B cell (primary cell): ENCODE measurements at regions of chr14 and their contacts with region 1.

Region 1: GRCh38 chr14:74712499-74713394 is at the starts of genes AREL1 and FCF1:
- DNase-seq: peak; percentile 91
- ATAC-seq: peak; percentile 94
- H3K4me3 ChIP-seq: peak within 1 kb of the TSS; percentile 64 to 97 (median 87)
- H3K4me3 Mint-ChIP-seq: peak within 1 kb of the TSS; percentile 88
- H3K27ac ChIP-seq: peak within 1 kb of the TSS; percentile 83 to 90
- H3K27ac Mint-ChIP-seq: peak within 1 kb of the TSS; percentile 85
- H3K4me1 ChIP-seq: peaks cover 18 to 20% of the 10 kb centered on the region in 2 donors
- H3K4me1 Mint-ChIP-seq: peaks cover 38% of the 10 kb centered on the region
- H3K27me3 ChIP-seq: no peaks in the 10 kb centered on the region
- H3K27me3 Mint-ChIP-seq: no peaks in the 10 kb centered on the region
- CTCF ChIP-seq: no peak
- total RNA-seq, gene AREL1: 39.4 and 44.4 TPM in 2 replicates
- total RNA-seq, gene FCF1: 40.6 and 41.6 TPM in 2 replicates

Region 2: GRCh38 chr14:74302634-74303577 is 409.8 kb before region 1 on chr14 and contains the start of gene ABCD4:
- CTCF ChIA-PET with region 1: no interaction called
- POLR2A ChIA-PET with region 1: no interaction called
- intact Hi-C with region 1: loop called (anchors 2 kb)
- DNase-seq: peak; percentile 90
- ATAC-seq: peak; percentile 98
- H3K4me3 ChIP-seq: peak within 1 kb of the TSS; percentile 69 to 96 (median 86)
- H3K4me3 Mint-ChIP-seq: peak within 1 kb of the TSS; percentile 95
- H3K27ac ChIP-seq: peak within 1 kb of the TSS; percentile 69 to 81
- H3K27ac Mint-ChIP-seq: peak within 1 kb of the TSS; percentile 88
- H3K4me1 ChIP-seq: peaks cover 11 to 14% of the 10 kb centered on the region in 2 donors
- H3K4me1 Mint-ChIP-seq: peaks cover 23% of the 10 kb centered on the region
- H3K27me3 ChIP-seq: no peaks in the 10 kb centered on the region
- H3K27me3 Mint-ChIP-seq: no peaks in the 10 kb centered on the region
- CTCF ChIP-seq: peak; percentile 59
- total RNA-seq, gene ABCD4: 119 and 125 TPM in 2 replicates

Region 3: GRCh38 chr14:74698465-74698864 is 14.3 kb before region 1 on chr14:
- CTCF ChIA-PET with region 1: no interaction called
- POLR2A ChIA-PET with region 1: no interaction called
- intact Hi-C with region 1: no loop called
- DNase-seq: no peak
- ATAC-seq: no peak
- H3K4me3 ChIP-seq: no peak overlapping the region
- H3K4me3 Mint-ChIP-seq: no peak overlapping the region
- H3K27ac ChIP-seq: no peak overlapping the region
- H3K27ac Mint-ChIP-seq: no peak overlapping the region
- H3K4me1 ChIP-seq: no peaks in the 10 kb centered on the region
- H3K4me1 Mint-ChIP-seq: peaks cover 2% of the 10 kb centered on the region
- H3K27me3 ChIP-seq: no peaks in the 10 kb centered on the region
- H3K27me3 Mint-ChIP-seq: no peaks in the 10 kb centered on the region
- CTCF ChIP-seq: no peak